Thyroid gland (tissue), 4 donors: ENCODE measurements at regions of chr1 and their contacts with region 1.

Region 1: DNA sequence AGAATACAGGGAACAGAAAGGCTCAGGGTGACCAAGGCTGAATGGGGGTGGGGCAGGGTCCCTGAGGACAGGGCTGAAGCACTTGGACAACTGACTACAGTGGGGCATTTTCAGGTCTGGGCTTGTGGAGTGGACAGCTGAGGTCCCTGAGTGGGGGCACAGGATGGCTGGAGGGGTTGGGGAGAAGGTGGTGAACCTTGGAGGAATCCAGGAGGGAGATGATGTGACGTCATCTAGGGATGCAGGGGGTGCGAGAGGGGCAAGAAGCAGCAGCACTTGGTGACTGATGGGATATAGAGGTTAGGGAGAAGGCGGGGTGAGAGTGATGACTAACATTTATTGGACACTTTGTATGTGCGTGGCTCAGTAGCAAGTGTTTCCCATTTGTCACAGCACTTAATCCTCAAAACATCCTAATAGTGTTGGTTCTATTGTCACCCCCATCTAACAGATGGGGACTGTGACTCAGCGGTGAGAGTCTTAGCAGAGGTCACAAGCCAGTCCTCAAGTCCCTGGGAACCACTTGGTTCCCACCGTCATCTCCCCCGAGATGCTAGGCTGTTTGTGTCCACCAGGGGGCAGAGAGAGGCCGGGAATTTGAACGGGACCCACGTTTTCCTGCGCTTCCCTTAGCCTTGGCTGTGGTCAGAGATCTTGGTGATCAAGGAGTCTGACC is 27.9 kb upstream of the BMP8B start:
- DNase-seq: peak; percentile 77 to 78
- H3K4me3 ChIP-seq: no peak overlapping the region
- H3K27ac ChIP-seq: no peak overlapping the region
- H3K4me1 ChIP-seq: peaks cover 0 to 6% of the 10 kb centered on the region in 2 donors
- H3K27me3 ChIP-seq: no peaks in the 10 kb centered on the region
- CTCF ChIP-seq: peak; percentile 73 to 96 (median 89)
- POLR2A ChIP-seq: no peak

Region 2: DNA sequence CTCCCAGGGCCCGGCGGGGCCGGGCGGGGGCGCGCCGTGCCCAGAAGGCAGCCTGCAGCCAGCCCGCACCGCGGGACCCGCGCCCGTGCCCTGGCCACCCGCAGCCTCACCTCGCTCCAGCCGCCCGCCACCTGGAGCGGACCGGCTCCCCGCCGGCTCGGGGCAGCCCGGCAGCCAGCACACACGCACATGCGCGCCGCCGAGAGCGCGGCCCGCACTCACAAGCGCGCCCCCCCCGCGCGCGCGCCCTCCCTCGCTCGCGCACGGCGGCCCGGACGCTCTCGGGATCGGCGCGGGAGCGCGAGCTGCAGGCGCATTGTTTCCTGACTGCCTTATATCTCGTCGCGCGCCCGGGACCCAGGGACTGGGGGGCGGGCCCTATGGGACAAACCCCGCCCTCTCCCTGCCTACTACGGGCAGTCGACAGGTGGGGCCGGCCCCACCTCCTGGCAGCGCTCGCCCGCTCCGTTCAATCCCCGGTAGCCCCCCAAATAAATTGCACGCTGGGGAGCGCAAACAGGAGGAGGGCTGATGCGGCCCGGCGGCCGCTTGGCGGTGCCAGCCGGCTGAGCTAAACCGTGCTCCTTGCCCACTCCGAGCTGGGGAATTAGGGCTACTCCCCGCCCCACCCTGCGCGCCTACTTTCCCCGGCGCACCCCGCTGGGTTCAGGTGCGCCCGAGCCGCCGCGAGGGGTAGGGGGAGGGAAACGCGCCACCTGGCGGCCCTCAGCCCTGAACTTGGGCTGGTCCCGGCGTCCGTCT is 85.3 kb after region 1 on chr1 and contains the start of gene MYCL:
- intact Hi-C with region 1: loop called (anchors 5 kb)
- DNase-seq: peak; percentile 90 to 92
- H3K4me3 ChIP-seq: peak within 1 kb of the TSS; percentile 47 to 60 (median 51)
- H3K27ac ChIP-seq: peak within 1 kb of the TSS in 2 of 3 donors; percentile 2 to 70
- H3K4me1 ChIP-seq: peaks cover 6 to 24% of the 10 kb centered on the region in 2 donors
- H3K27me3 ChIP-seq: no peaks in the 10 kb centered on the region
- CTCF ChIP-seq: peak; percentile 72 to 90 (median 78)
- POLR2A ChIP-seq: peak; percentile 26 to 98
- total RNA-seq, gene MYCL: 1.4 to 3.9 (median 3.5) TPM

Region 3: DNA sequence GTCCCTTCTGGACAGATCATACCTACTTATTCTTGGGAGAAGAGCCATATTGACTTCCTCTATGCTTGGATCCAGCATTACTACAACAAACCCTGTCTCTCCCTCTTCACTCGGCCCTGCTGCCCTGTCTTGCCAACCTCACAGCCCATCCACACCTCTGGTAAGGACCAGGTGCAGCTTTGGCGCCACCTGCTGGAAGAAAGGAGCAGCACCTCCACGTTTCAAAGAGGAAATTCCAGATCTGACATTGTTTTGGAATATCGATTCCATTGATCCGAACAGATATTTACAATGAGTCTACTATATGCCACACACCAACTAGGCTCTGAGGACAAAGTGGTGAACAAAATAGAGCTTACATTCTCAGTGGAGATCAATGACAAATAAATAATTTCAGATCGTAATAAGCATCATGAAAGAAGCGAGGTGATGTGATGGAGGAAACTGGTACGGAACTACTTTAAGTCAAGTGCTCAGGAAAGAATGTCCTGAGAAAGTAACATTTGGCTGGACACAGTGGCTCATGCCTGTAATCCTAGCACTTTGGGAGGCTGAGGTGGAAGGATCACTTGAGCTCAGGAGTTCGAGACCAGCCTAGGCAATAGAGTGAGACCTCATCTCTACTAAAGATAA is 157.1 kb after region 1 on chr1:
- intact Hi-C with region 1: loop called (anchors 2 kb)
- DNase-seq: peak; percentile 79 to 85
- H3K4me3 ChIP-seq: no peak overlapping the region
- H3K27ac ChIP-seq: no peak overlapping the region
- H3K4me1 ChIP-seq: peaks cover 0 to 8% of the 10 kb centered on the region in 2 donors
- H3K27me3 ChIP-seq: no peaks in the 10 kb centered on the region
- CTCF ChIP-seq: peak; percentile 87 to 98 (median 95)
- POLR2A ChIP-seq: no peak